HCT116 (cell line): ENCODE measurements at regions of chr14 and their contacts with region 1.

Region 1: GRCh38 chr14:23120541-23121251 is 1.6 kb upstream of the CEBPE start:
- DNase-seq: peak; percentile 73
- ATAC-seq: peak; percentile 97
- H3K4me3 ChIP-seq: no peak overlapping the region
- H3K27ac ChIP-seq: no peak overlapping the region
- H3K4me1 ChIP-seq: peaks cover 0 to 3% of the 10 kb centered on the region in 2 experiments; a peak in 2 of 4 replicates
- H3K27me3 ChIP-seq: no peaks in the 10 kb centered on the region
- CTCF ChIP-seq: peak; percentile 100
- POLR2A ChIP-seq: no peak
- RAD21 ChIP-seq: peak; percentile 99

Region 2: GRCh38 chr14:22556990-22557623 is 563.6 kb before region 1 on chr14:
- CTCF ChIA-PET with region 1: no interaction called
- POLR2A ChIA-PET with region 1: no interaction called
- RAD21 ChIA-PET with region 1: no interaction called
- intact Hi-C with region 1: no loop called
- DNase-seq: peak; percentile 48
- ATAC-seq: peak; percentile 92
- H3K4me3 ChIP-seq: 0 out of 4 replicates have a peak overlapping the region, but pooled peaks of 1 of the 2 experiments have one; percentile 23
- H3K27ac ChIP-seq: no peak overlapping the region
- H3K4me1 ChIP-seq: peaks cover 5 to 24% of the 10 kb centered on the region in 2 experiments
- H3K27me3 ChIP-seq: no peaks in the 10 kb centered on the region
- CTCF ChIP-seq: peak; percentile 95 to 100 (median 99)
- POLR2A ChIP-seq: no peak
- RAD21 ChIP-seq: peak; percentile 96

Region 3: GRCh38 chr14:23095196-23096108 is 25.2 kb before region 1 on chr14 and contains the start of gene C14orf119:
- CTCF ChIA-PET with region 1: interaction called, 21 read pairs
- POLR2A ChIA-PET with region 1: interaction called, 7 read pairs
- RAD21 ChIA-PET with region 1: interaction called in 1 of 2 experiments, 5 read pairs
- intact Hi-C with region 1: no loop called
- DNase-seq: peak; percentile 99
- ATAC-seq: peak; percentile 88
- H3K4me3 ChIP-seq: peak within 1 kb of the TSS; percentile 90 to 96
- H3K27ac ChIP-seq: peak within 1 kb of the TSS; percentile 87
- H3K4me1 ChIP-seq: peaks cover 6 to 12% of the 10 kb centered on the region in 2 experiments; a peak in 2 of 4 replicates
- H3K27me3 ChIP-seq: no peaks in the 10 kb centered on the region
- CTCF ChIP-seq: no peak
- POLR2A ChIP-seq: peak; percentile 67
- RAD21 ChIP-seq: no peak
- total RNA-seq, gene C14orf119: 46.8 TPM

Region 4: GRCh38 chr14:23177181-23177580 is 56.5 kb after region 1 on chr14:
- CTCF ChIA-PET with region 1: interaction called, 162 read pairs
- POLR2A ChIA-PET with region 1: no interaction called
- RAD21 ChIA-PET with region 1: interaction called in 1 of 2 experiments, 6 read pairs
- intact Hi-C with region 1: no loop called
- DNase-seq: no peak
- ATAC-seq: no peak
- H3K4me3 ChIP-seq: no peak overlapping the region
- H3K27ac ChIP-seq: no peak overlapping the region
- H3K4me1 ChIP-seq: peaks cover 2 to 4% of the 10 kb centered on the region in 2 experiments; a peak in 3 of 4 replicates
- H3K27me3 ChIP-seq: no peaks in the 10 kb centered on the region
- CTCF ChIP-seq: no peak
- POLR2A ChIP-seq: no peak
- RAD21 ChIP-seq: no peak

Region 5: GRCh38 chr14:23301288-23301968 is 180.7 kb after region 1 on chr14:
- CTCF ChIA-PET with region 1: interaction called, 24 read pairs
- POLR2A ChIA-PET with region 1: no interaction called
- RAD21 ChIA-PET with region 1: interaction called in 1 of 2 experiments, 3 read pairs
- intact Hi-C with region 1: loop called (anchors 2 kb)
- DNase-seq: peak; percentile 95
- ATAC-seq: peak; percentile 84
- H3K4me3 ChIP-seq: peak overlapping the region; percentile 54 to 64
- H3K27ac ChIP-seq: peak overlapping the region; percentile 96
- H3K4me1 ChIP-seq: peaks cover 18 to 41% of the 10 kb centered on the region in 2 experiments
- H3K27me3 ChIP-seq: no peaks in the 10 kb centered on the region
- CTCF ChIP-seq: peak in 2 of 3 experiments; percentile 69 to 70; a peak in 4 of 6 replicates
- POLR2A ChIP-seq: peak; percentile 33
- RAD21 ChIP-seq: no peak

Region 6: DNA sequence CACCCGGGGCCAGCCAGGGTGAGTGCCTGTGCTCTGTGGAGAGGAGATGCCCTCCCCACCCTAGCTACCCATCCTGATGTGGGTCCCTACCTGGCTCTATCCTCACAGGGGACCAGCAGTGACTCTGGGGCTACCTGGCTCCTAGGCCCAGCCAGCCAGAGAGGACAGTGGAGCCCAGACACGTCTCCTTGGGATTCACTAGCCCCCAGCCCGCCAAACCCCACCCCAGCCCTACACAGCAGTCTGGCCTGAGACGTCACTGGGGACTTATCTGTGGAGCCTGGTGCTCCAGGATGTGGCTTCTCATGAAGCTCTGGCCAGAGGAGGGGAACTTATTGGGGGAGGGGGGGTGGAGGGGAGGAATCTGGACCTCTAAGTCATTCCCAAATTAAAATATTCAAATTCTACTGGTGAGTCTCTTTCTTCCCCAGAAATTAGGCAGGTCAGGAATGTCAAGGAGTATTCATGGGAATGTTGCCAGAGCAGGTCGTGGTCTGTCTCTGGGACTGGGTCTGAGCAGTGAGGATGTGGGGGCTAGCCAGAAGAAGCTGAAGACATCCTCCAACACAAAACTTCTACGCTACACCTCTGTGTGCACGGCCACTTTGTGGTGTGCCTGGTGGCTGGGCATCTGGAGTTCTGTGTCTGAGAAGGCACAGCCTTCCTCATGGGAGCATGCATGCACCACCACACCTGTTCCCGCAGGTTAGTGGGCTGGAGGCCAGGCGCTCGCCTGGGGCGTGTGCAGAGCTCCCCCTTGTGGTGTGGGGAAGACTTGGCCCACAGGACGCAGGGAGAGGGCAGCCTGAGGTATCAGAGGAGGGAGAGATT is 258.9 kb after region 1 on chr14:
- CTCF ChIA-PET with region 1: interaction called, 24 read pairs
- POLR2A ChIA-PET with region 1: interaction called, 3 read pairs
- RAD21 ChIA-PET with region 1: no interaction called
- intact Hi-C with region 1: loop called (anchors 5 kb)
- DNase-seq: peak; percentile 40
- ATAC-seq: peak; percentile 96
- H3K4me3 ChIP-seq: no peak overlapping the region
- H3K27ac ChIP-seq: no peak overlapping the region
- H3K4me1 ChIP-seq: no peaks in the 10 kb centered on the region
- H3K27me3 ChIP-seq: 0 out of 2 replicates have a peak, but pooled peaks cover 6% of the 10 kb centered on the region
- CTCF ChIP-seq: peak; percentile 90 to 99 (median 98)
- POLR2A ChIP-seq: no peak
- RAD21 ChIP-seq: peak; percentile 93